ENCODE measurements at regions of chr2 and their contacts with region 1.

Region 1: DNA sequence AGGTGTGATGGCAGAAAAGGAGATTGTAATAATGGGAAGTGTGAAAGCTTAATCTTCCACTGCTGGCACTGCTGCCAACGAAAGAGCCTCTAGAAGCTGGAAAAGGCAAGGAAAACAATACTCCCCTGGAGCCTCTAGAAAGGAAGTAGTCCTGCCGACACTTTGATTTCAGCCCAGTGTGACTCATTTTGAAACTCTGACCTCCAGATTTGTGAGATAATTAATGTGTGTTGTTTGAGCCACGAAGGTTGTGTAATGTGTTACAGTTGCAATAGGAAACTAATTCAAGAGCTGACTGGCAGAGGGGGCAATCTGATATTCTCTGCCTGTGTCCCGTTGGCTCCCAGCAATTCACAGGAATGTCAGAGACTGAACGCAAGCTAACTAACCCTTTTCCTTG is 219.2 kb upstream of the UBE2E3 start:
- DNase-seq: peak; percentile 89
- ATAC-seq: peak; percentile 81
- H3K4me3 ChIP-seq: no peak overlapping the region
- H3K27ac ChIP-seq: no peak overlapping the region
- H3K4me1 ChIP-seq: peaks cover 57% of the 10 kb centered on the region
- H3K27me3 ChIP-seq: no peaks in the 10 kb centered on the region
- CTCF ChIP-seq: no peak
- EP300 ChIP-seq: peak; percentile 44 to 80; a peak in 2 of 4 replicates
- POLR2A ChIP-seq: no peak
- RAD21 ChIP-seq: no peak

Region 2: GRCh38 chr2:180125245-180125962 is 635.8 kb before region 1 on chr2:
- CTCF ChIA-PET with region 1: no interaction called
- POLR2A ChIA-PET with region 1: no interaction called
- in situ Hi-C with region 1: no loop called
- intact Hi-C with region 1: loop called (anchors 5 kb)
- DNase-seq: peak; percentile 78
- ATAC-seq: peak; percentile 96
- H3K4me3 ChIP-seq: no peak overlapping the region; a peak in 1 of 6 replicates
- H3K27ac ChIP-seq: no peak overlapping the region
- H3K4me1 ChIP-seq: peaks cover 5% of the 10 kb centered on the region; the same call in 1 of the 2 replicates
- H3K27me3 ChIP-seq: no peaks in the 10 kb centered on the region
- CTCF ChIP-seq: peak; percentile 67
- EP300 ChIP-seq: no peak
- POLR2A ChIP-seq: no peak
- RAD21 ChIP-seq: 0 out of 2 replicates have a peak, but pooled peaks have one; percentile 20

Region 3: DNA sequence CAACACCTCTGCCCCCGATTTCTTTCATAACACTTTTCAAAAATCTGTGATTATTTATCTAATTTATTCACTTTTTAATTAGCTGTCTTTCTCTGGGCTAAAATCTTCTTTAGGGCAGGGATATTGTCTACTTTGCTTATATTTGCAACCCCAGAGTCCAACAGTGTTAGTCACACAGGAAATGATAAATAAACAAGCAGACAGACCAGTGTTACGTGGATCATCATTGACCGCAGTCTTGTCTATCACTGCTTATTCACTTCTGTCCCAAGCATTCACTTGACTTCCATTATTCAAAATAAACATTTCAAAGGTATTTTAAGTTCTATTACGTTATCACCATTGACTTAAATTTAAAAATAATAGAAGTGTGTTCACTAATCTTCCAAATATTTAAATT is 18.4 kb before region 1 on chr2:
- CTCF ChIA-PET with region 1: no interaction called
- POLR2A ChIA-PET with region 1: interaction called, 3 read pairs
- in situ Hi-C with region 1: no loop called
- intact Hi-C with region 1: loop called (anchors 1 kb)
- DNase-seq: peak; percentile 34
- ATAC-seq: peak; percentile 88
- H3K4me3 ChIP-seq: no peak overlapping the region
- H3K27ac ChIP-seq: no peak overlapping the region
- H3K4me1 ChIP-seq: peaks cover 14% of the 10 kb centered on the region
- H3K27me3 ChIP-seq: no peaks in the 10 kb centered on the region
- CTCF ChIP-seq: no peak
- EP300 ChIP-seq: peak in 1 of 2 experiments; percentile 42; a peak in 1 of 4 replicates
- POLR2A ChIP-seq: no peak
- RAD21 ChIP-seq: no peak

Region 4: DNA sequence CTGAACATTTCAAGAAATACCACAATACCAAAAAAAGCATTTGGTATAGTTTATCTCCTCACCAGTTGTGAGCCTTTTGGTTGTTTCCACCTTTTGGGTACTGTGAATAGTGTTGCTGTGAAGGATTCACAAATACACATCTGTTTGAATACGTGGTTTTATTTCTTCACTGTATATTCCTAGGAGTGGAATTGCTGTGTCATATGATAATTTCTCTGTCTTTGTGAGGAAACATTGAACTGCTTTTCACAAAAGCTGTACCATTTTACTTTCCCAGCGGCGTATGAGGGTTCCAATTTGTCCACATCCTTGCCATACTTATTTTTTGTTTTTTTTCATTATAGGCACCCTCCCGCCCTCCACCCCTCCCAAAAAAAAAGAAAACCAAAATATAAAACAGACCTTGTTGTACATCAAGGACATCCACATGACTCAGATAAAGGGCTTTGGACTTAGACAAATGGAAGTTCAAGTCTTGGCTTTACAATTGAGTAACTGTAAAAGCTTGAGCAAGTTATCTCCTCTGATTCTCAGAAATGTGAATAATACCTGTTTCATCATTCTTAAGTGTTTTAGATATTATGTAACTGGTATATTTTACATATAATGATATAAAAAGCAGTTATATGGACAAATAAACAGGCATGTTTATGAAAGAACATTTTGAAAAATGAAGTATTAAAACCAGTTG is 238.2 kb after region 1 on chr2:
- CTCF ChIA-PET with region 1: no interaction called
- POLR2A ChIA-PET with region 1: no interaction called
- in situ Hi-C with region 1: no loop called
- intact Hi-C with region 1: no loop called
- DNase-seq: no peak
- ATAC-seq: no peak
- H3K4me3 ChIP-seq: no peak overlapping the region
- H3K27ac ChIP-seq: no peak overlapping the region
- H3K4me1 ChIP-seq: peaks cover 15% of the 10 kb centered on the region
- H3K27me3 ChIP-seq: no peaks in the 10 kb centered on the region
- CTCF ChIP-seq: no peak
- EP300 ChIP-seq: no peak
- POLR2A ChIP-seq: no peak
- RAD21 ChIP-seq: no peak